ENCODE measurements at regions of chr1 and their contacts with region 1.

Region 1: GRCh38 chr1:26472901-26473845 is 933 bp downstream of the HMGN2 start:
- DNase-seq: peak; percentile 94
- ATAC-seq: peak; percentile 71
- H3K4me3 Mint-ChIP-seq: peak overlapping the region; percentile 89
- H3K27ac Mint-ChIP-seq: peak overlapping the region; percentile 40
- H3K4me1 Mint-ChIP-seq: peaks cover 49% of the 10 kb centered on the region
- H3K27me3 Mint-ChIP-seq: no peaks in the 10 kb centered on the region
- CTCF ChIP-seq: no peak

Region 2: DNA sequence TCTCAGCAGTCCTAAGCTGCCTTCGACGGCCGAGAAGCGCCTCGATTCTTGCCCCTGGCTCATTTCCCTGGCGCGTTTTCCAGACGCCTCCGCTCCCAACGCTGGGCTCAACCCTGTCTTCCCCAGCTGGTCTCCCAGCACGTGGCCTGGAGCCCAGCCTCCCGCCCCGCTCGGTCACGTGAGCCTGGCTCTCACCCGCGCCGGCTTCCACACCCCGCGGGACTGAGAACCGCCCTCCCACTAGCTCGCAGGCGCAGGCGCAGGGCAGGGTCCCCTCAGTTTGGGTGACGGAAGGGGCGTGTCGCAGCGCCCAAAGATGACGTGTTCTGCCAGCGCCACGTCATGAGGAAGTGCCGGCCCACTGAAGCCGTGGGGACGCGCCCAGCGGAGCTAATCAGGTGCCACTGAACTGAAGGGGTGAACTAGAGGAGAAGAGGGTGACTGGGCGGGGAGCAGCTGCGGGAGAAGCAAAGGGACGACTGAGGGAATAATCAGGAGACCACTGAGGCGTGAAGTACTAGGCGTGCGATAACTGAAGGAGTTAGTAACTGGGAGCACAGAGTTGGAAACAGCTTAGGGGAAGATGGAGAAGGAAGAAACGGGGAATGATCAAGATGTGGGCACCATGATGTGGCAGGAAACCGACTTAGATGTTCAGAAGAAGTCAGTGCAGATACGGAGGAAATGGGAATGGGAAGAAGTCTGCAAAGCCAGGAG is 41.0 kb before region 1 on chr1 and contains the start of gene DHDDS:
- CTCF ChIA-PET with region 1: interaction called, 14 read pairs
- POLR2A ChIA-PET with region 1: interaction called, 9 read pairs
- intact Hi-C with region 1: no loop called
- DNase-seq: peak; percentile 98
- ATAC-seq: peak; percentile 98
- H3K4me3 Mint-ChIP-seq: peak within 1 kb of the TSS; percentile 91
- H3K27ac Mint-ChIP-seq: peak within 1 kb of the TSS; percentile 88
- H3K4me1 Mint-ChIP-seq: peaks cover 19% of the 10 kb centered on the region
- H3K27me3 Mint-ChIP-seq: peaks cover 1% of the 10 kb centered on the region
- CTCF ChIP-seq: no peak
- total RNA-seq, gene DHDDS: 33.3 to 36.9 TPM

Region 3: DNA sequence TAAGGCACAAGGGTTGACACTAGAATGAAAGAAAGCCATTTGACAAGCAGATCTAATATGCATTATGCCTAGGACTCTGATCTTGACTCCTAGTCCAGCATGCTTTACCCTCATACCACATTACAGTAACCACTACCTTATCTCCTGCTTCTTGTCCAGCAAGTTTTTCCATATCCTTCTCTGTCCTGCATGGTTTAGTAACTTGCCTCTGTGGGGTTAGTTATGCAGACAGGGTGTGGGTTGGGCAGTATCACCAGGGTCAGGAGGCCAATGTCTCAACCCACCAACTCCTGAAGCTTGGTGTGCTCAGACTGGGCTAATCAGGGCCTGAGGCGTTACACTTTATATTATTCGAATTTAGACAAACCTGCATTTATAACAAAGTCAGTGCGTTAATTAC is 22.3 kb before region 1 on chr1:
- CTCF ChIA-PET with region 1: interaction called, 10 read pairs
- POLR2A ChIA-PET with region 1: interaction called, 3 read pairs
- intact Hi-C with region 1: no loop called
- DNase-seq: no peak
- ATAC-seq: no peak
- H3K4me3 Mint-ChIP-seq: no peak overlapping the region
- H3K27ac Mint-ChIP-seq: no peak overlapping the region
- H3K4me1 Mint-ChIP-seq: no peaks in the 10 kb centered on the region
- H3K27me3 Mint-ChIP-seq: no peaks in the 10 kb centered on the region
- CTCF ChIP-seq: no peak

Region 4: DNA sequence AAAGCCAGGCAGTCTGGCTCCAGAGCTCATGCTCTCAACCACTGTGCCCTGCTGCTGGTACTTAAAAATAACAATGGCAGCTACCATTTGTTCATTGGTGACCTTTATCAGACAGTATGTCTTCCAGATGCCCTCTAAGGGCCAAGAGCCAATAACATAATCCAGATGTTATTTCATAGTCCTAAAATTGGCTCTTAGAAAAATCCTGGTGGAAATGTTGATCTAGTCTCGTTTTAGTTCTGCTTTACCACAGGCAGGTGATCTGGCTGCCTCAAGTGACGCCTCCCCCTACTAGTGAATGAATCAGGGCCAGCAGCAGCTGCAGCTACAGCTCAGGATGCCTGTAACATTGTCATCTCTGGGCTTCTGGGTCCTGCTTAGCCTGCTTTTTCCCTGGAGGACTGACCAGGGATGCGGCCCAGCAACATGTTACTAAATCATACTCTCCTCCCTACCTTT is 13.6 kb before region 1 on chr1:
- CTCF ChIA-PET with region 1: interaction called, 26 read pairs
- POLR2A ChIA-PET with region 1: interaction called, 4 read pairs
- intact Hi-C with region 1: no loop called
- DNase-seq: no peak
- ATAC-seq: no peak
- H3K4me3 Mint-ChIP-seq: no peak overlapping the region
- H3K27ac Mint-ChIP-seq: no peak overlapping the region
- H3K4me1 Mint-ChIP-seq: no peaks in the 10 kb centered on the region
- H3K27me3 Mint-ChIP-seq: no peaks in the 10 kb centered on the region
- CTCF ChIP-seq: no peak

Measured in activated CD8-positive, alpha-beta T cell treated with anti-CD3 and anti-CD28 coated beads for 36 hours (primary cell).